ENCODE measurements at regions of chr4 and their contacts with region 1.

Region 1: DNA sequence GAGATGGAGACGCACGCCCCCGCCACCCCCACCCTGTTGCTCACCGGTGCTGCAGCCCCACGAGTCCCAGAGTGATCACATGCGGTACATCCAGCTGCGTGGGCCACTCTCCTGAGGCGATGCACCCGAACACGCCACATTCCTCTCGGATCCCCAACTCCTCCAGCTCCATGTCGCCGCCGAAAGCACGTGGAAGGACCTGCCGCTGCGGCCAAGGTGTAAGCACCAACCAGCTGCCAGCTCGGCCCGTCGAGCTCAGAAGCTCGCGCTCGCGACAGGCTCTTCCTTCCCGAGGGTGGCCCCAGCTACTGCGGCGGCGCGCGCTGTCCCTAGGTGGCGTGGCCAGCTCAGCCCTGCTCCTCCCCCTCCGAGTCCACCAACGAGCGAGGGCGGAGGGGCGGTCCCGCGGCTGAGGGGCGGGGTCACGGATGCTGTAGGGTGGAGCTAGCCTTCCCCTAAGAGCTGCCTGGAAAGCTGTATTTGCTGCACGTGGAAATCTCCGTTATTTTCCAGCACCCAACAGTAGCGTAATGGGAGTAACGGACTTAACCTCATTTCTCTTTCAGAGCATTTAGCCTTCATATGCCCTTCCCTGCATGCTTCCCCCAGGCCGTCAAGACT is at the start of gene PPAT:
- DNase-seq: peak; percentile 97 to 99 (median 99)
- ATAC-seq: peak; percentile 84
- H3K4me3 ChIP-seq: peak within 1 kb of the TSS; percentile 83 to 95
- H3K4me3 Mint-ChIP-seq: peak within 1 kb of the TSS; percentile 95
- H3K27ac ChIP-seq: peak within 1 kb of the TSS; percentile 73 to 93
- H3K27ac Mint-ChIP-seq: peak within 1 kb of the TSS; percentile 97
- H3K4me1 ChIP-seq: peaks cover 28% of the 10 kb centered on the region
- H3K4me1 Mint-ChIP-seq: peaks cover 58% of the 10 kb centered on the region
- H3K27me3 ChIP-seq: no peaks in the 10 kb centered on the region
- H3K27me3 Mint-ChIP-seq: no peaks in the 10 kb centered on the region
- CTCF ChIP-seq: no peak
- total RNA-seq, gene PPAT: 6.9 to 7.0 TPM

Region 2: DNA sequence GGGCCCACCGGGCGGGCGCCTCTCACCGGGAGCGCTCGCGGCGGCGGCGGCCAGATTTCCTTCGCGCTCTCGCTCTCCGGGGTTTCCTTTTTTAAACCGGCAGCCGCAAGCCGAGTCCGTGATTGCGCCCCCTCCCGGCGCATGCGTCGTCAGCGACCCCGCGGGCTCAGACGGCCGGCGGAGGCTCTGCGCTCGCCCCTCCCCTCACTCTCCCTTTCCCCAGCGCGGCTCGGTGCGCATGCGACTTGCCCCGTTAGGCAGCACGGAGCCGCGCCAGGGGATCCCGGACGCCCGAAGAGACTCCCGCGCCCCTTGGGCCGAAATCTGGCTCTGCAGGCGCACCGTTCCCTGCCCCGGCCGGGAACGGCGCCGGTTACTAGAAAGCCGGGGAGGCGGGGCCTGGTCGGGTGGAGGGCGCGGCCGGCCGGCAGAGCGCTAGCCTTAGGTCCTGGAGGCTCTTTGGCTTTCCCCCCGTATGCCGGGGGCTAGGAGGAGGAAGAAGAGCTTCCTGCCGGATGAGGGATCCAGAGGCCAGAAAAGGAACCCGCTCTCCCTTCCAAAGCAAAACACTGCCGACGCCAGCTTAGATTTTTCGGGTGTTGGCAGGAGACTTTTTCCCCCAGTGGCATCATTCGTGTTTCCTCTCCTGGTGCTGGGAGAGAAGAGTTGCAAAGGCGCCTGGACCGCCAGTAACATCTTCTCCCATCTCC is 888.5 kb before region 1 on chr4 and contains the start of gene CLOCK:
- CTCF ChIA-PET with region 1: no interaction called
- POLR2A ChIA-PET with region 1: no interaction called
- intact Hi-C with region 1: loop called in 1 of 2 experiments (anchors 2 kb)
- DNase-seq: peak; percentile 60 to 91 (median 82)
- ATAC-seq: peak; percentile 72
- H3K4me3 ChIP-seq: peak within 1 kb of the TSS; percentile 90 to 91
- H3K4me3 Mint-ChIP-seq: peak within 1 kb of the TSS; percentile 93
- H3K27ac ChIP-seq: peak within 1 kb of the TSS; percentile 71 to 82
- H3K27ac Mint-ChIP-seq: peak within 1 kb of the TSS; percentile 93
- H3K4me1 ChIP-seq: peaks cover 9% of the 10 kb centered on the region
- H3K4me1 Mint-ChIP-seq: peaks cover 40% of the 10 kb centered on the region
- H3K27me3 ChIP-seq: no peaks in the 10 kb centered on the region
- H3K27me3 Mint-ChIP-seq: peaks cover 5% of the 10 kb centered on the region
- CTCF ChIP-seq: peak; percentile 41
- total RNA-seq, gene CLOCK: 3.7 to 4.3 TPM

Region 3: DNA sequence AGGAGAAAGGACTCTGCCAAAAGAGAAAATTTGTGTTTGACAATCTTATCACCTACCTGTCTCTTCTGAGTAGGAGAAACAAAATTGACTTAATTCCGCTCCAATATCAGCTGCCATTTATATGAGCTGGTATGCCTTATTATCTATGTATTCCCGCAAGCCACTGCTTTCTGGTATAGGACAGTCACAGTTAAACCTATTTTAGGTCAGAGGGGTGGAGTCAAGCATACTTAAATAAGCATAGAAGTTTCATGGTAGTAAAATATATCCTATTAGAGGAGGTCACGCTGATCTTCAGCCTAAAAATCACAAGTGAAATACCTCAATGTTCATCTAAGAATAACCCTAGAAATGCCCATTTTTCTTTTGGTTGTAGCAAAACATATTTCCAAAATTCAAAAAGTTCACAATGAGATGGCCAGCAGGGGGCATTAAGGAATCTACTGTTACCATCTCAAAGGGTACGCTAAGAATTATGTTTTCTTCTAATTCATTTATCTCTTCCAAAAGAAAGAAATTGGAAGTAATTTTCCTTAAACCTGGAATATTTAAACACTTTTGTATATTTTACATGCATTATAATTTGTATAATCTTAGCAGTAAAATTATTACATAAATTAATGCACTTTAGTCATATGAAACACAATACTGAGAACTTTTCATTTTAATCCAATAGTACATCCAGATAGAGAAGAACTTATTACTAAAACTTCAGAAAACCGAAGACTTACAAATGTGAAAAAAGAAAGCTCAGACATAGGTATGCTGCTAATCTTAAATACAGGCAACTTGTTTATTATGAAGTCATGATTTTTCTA is 10.5 kb before region 1 on chr4:
- CTCF ChIA-PET with region 1: interaction called, 36 read pairs
- POLR2A ChIA-PET with region 1: interaction called, 5 read pairs
- intact Hi-C with region 1: loop called in 1 of 2 experiments (anchors 1 kb)
- DNase-seq: peak in 7 of 9 experiments; percentile 21 to 71 (median 52)
- ATAC-seq: peak; percentile 61
- H3K4me3 ChIP-seq: no peak overlapping the region
- H3K4me3 Mint-ChIP-seq: no peak overlapping the region
- H3K27ac ChIP-seq: no peak overlapping the region
- H3K27ac Mint-ChIP-seq: no peak overlapping the region
- H3K4me1 ChIP-seq: no peaks in the 10 kb centered on the region
- H3K4me1 Mint-ChIP-seq: peaks cover 8% of the 10 kb centered on the region
- H3K27me3 ChIP-seq: no peaks in the 10 kb centered on the region
- H3K27me3 Mint-ChIP-seq: no peaks in the 10 kb centered on the region
- CTCF ChIP-seq: peak; percentile 90

Region 4: DNA sequence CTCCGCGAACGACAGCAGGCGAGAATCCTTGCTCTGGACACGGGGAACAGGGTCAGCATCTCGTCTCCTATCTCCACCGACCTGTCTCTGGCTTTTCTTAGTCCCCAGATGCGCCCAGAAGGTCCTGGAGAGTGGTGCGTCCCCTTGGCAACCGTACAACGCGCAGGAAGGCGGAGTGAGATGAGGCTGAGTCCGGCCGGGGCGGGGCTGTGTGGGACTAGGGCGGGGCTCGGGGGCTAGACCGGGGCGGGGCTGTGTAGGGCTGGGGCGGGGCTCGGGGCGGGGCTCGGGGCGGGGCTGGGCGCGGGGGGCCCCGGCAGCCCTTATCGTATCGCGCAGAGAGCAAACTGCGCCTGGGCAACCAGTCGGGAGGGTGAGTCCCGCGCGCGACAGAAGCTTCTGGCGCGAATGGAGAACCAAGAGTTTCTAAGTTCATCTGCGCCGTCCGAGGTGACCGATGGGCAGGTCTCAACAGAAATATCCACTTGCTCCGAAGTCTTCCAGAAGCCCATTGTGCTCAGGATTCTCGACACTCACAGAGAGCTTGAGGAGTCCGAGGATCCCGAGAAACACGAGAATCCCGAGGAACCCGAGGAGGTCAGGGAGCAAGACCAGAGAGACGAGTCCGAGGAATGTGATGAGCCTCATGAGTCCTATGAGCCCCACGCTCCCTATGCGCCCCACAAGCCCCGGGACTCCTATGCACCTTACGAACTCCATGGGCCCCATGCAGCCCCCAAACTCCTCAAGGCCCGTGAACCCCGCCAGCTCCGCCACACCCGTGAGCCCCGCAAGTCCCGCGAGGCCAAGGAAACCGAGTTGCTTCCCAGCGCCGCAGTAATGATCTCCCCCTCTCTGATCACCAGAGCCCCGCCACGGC is 95.1 kb after region 1 on chr4:
- CTCF ChIA-PET with region 1: no interaction called
- POLR2A ChIA-PET with region 1: interaction called, 5 read pairs
- intact Hi-C with region 1: loop called in 1 of 2 experiments (anchors 1 kb)
- DNase-seq: peak; percentile 51 to 86 (median 81)
- ATAC-seq: peak; percentile 96
- H3K4me3 ChIP-seq: peak overlapping the region; percentile 59 to 87
- H3K4me3 Mint-ChIP-seq: no peak overlapping the region
- H3K27ac ChIP-seq: no peak overlapping the region
- H3K27ac Mint-ChIP-seq: no peak overlapping the region
- H3K4me1 ChIP-seq: peaks cover 6% of the 10 kb centered on the region
- H3K4me1 Mint-ChIP-seq: no peaks in the 10 kb centered on the region
- H3K27me3 ChIP-seq: peaks cover 3 to 5% of the 10 kb centered on the region in 2 experiments
- H3K27me3 Mint-ChIP-seq: peaks cover 9% of the 10 kb centered on the region
- CTCF ChIP-seq: no peak

Region 5: DNA sequence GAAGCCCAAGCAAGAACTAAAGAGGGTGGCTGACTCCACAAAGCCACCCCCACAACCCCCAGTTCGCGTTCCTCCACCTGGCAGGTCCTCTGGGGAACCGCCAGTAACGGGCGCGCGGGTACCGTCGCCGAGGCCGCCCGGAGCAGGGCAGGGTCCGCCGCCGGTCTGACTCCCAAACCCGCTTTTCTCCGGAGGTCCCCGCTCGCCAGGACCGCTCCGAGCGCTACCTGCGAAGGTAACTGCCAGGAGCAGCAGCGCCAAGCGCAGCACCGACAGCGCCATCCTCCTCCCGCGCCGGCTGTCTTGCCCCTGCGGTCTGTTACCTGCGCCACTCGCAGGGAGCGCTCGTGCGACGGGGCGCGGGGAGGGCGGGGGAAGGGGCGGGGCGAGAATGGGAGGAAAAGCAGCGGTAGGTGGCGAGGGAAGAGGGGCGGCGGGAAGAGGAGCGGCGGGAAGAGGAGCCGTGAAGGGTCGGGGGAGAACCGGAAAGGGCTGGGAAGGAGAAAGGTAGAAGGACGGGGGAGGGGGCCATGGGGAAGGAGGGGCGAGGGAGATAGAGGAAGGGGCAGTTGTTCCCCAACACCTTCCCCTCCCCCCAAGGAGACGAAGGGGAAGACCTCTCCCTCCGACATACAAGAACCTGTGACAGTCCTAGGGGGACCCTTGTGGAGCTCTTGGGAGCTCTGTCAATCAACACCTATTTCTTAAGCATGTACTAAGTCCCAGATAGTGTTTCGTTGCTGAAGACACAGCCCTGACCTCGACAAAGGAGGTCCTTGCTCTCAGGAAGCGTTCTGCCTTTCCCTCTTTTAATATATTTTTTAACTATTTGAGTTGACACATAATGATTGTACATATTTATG is 386.2 kb after region 1 on chr4 and contains the start of gene SPINK2:
- CTCF ChIA-PET with region 1: no interaction called
- POLR2A ChIA-PET with region 1: interaction called, 3 read pairs
- intact Hi-C with region 1: loop called (anchors 5 kb)
- DNase-seq: peak; percentile 41 to 88 (median 76)
- ATAC-seq: peak; percentile 87
- H3K4me3 ChIP-seq: peak within 1 kb of the TSS; percentile 58 to 65
- H3K4me3 Mint-ChIP-seq: peak within 1 kb of the TSS; percentile 81
- H3K27ac ChIP-seq: peak within 1 kb of the TSS; percentile 36
- H3K27ac Mint-ChIP-seq: peak within 1 kb of the TSS; percentile 27
- H3K4me1 ChIP-seq: peaks cover 34% of the 10 kb centered on the region
- H3K4me1 Mint-ChIP-seq: peaks cover 36% of the 10 kb centered on the region
- H3K27me3 ChIP-seq: no peaks in the 10 kb centered on the region
- H3K27me3 Mint-ChIP-seq: no peaks in the 10 kb centered on the region
- CTCF ChIP-seq: no peak
- total RNA-seq, gene SPINK2: 2.6 to 4.4 TPM